Natural killer cell (primary cell): ENCODE measurements at regions of chr14 and their contacts with region 1.

Region 1: DNA sequence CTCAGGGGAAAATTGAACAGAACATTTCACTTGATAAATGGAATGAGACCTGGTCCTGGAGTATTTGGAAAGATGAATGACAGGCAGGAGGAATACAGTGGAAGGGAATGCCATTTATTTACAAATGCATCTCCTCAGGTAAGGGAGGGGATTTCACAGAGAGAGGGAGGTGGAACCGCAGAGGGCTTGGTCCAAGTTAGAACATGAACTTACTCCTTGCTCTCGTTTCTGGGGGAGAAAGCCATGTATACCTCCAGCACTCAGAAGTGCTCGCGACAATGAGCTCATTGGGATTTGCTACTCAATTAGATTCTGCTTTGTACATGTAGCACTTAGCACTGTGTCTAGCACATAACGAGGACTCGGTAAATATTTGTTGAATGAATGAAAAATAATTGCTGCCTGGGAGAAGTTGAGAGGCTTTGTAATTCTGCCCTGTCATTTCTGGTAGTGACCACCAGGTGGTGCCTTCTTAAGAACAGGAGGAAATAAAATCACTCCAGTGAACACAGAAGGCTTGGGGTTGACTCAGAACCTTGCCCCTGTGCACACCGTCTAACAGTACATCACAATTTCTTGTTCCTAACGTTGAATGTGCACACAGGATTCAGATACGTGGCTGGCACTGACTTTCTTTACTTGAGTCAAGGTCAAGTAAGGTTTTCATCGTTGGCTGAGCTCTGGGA is 91.6 kb downstream of the RGS6 start:
- DNase-seq: peak in 1 of 2 donors; percentile 53
- ATAC-seq: peak; percentile 34 to 62 (median 38)
- H3K4me3 ChIP-seq: no peak overlapping the region
- H3K4me3 Mint-ChIP-seq: no peak overlapping the region
- H3K27ac ChIP-seq: no peak overlapping the region
- H3K27ac Mint-ChIP-seq: no peak overlapping the region
- H3K4me1 ChIP-seq: no peaks in the 10 kb centered on the region
- H3K4me1 Mint-ChIP-seq: no peaks in the 10 kb centered on the region
- H3K27me3 ChIP-seq: peaks cover 2% of the 10 kb centered on the region
- H3K27me3 Mint-ChIP-seq: peaks cover 17 to 27% of the 10 kb centered on the region in 2 donors
- CTCF ChIP-seq: peak; percentile 66

Region 2: GRCh38 chr14:72291908-72292688 is 268.2 kb after region 1 on chr14:
- intact Hi-C with region 1: loop called (anchors 5 kb)
- DNase-seq: peak in 1 of 2 donors; percentile 15
- ATAC-seq: peak in 1 of 3 donors; percentile 39
- H3K4me3 ChIP-seq: no peak overlapping the region
- H3K4me3 Mint-ChIP-seq: no peak overlapping the region
- H3K27ac ChIP-seq: no peak overlapping the region
- H3K27ac Mint-ChIP-seq: no peak overlapping the region
- H3K4me1 ChIP-seq: no peaks in the 10 kb centered on the region
- H3K4me1 Mint-ChIP-seq: no peaks in the 10 kb centered on the region
- H3K27me3 ChIP-seq: no peaks in the 10 kb centered on the region
- H3K27me3 Mint-ChIP-seq: peaks cover 9 to 23% of the 10 kb centered on the region in 2 donors
- CTCF ChIP-seq: peak; percentile 51

Region 3: DNA sequence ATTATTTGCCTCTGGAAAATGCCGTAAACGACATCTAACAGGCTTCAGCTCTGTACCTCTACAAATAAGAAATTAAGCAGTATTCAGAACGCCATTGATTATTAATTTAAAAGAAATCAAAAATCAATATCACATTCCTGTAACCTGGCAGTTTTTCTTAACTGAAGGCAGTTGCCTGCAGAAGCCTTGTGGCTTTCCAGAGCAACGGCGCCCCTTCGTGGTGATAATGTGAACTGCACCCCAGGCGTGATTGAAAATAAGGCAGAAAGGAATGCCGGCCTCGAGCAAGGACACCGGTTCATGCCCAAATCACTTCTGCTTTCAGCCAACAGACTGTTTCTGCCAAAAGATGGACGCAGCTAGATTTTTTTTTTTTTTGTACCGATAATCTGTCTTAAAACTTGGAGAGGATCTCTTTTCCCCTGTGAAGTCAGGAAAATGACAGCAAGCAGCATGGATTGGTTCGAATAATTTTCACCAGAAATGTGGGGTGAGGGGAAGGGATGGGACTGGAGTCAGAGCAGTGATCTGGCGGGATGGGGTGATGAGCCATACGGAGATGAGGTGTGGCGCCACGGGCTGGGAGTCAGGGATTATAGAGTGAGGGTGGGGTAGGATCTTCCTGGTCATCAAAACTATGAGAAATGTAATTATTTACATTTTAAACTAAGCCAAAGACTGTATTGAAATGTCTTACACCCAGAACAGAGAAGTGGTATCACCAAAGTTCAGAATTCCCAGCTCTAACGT is 397.0 kb after region 1 on chr14:
- intact Hi-C with region 1: loop called (anchors 1 kb)
- DNase-seq: peak; percentile 66 to 72
- ATAC-seq: peak; percentile 62 to 79 (median 63)
- H3K4me3 ChIP-seq: no peak overlapping the region
- H3K4me3 Mint-ChIP-seq: no peak overlapping the region
- H3K27ac ChIP-seq: no peak overlapping the region
- H3K27ac Mint-ChIP-seq: no peak overlapping the region
- H3K4me1 ChIP-seq: peaks cover 4% of the 10 kb centered on the region
- H3K4me1 Mint-ChIP-seq: peaks cover 5 to 13% of the 10 kb centered on the region in 2 donors
- H3K27me3 ChIP-seq: no peaks in the 10 kb centered on the region
- H3K27me3 Mint-ChIP-seq: peaks cover 0 to 2% of the 10 kb centered on the region in 2 donors
- CTCF ChIP-seq: peak; percentile 99

Region 4: DNA sequence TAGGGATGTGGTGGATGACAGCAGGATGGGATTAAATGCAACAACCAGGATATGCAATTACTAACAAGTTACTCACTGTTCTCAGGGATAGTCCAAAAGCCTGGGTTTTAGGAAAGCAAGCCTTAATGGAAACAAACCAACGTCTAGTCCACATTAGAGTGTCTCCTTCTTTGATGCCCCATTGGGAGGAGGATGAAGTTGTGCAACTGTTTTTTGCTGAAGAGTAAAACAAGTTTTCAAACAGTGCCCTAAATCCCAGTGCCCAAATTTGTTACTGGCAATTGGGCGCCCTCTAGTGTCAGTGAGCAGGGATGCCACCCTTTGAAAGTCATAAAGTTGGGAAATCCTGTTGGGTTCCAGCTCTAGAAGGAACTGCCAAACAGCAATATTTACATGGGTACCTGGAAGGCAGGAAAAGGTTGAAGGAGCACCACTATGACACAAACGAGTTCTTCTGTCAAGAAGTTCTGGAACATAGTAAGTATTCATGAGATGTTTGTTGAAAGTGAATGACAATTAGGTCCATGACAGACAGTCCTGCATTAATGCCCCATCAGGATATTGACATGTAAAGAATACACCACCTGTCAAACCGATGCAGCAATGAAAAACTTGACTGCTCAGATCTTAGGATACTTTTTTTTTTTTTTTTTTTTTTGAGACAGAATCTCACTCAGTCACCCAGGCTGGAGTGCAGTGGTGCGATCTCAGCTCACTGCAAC is 881.1 kb after region 1 on chr14:
- intact Hi-C with region 1: loop called (anchors 5 kb)
- DNase-seq: peak; percentile 38 to 86
- ATAC-seq: peak; percentile 73 to 88 (median 86)
- H3K4me3 ChIP-seq: no peak overlapping the region
- H3K4me3 Mint-ChIP-seq: no peak overlapping the region
- H3K27ac ChIP-seq: no peak overlapping the region
- H3K27ac Mint-ChIP-seq: no peak overlapping the region
- H3K4me1 ChIP-seq: no peaks in the 10 kb centered on the region
- H3K4me1 Mint-ChIP-seq: no peaks in the 10 kb centered on the region
- H3K27me3 ChIP-seq: peaks cover 2% of the 10 kb centered on the region
- H3K27me3 Mint-ChIP-seq: peaks cover 38 to 42% of the 10 kb centered on the region in 2 donors
- CTCF ChIP-seq: peak; percentile 93